ENCODE measurements at regions of chr17 and their contacts with region 1.

Region 1: GRCh38 chr17:43324205-43324893 is 74.4 kb upstream of the ARL4D start:
- DNase-seq: no peak
- H3K4me3 ChIP-seq: no peak overlapping the region
- H3K27ac ChIP-seq: no peak overlapping the region
- H3K4me1 ChIP-seq: peaks cover 7% of the 10 kb centered on the region
- H3K27me3 ChIP-seq: no peaks in the 10 kb centered on the region
- CTCF ChIP-seq: peak; percentile 11 to 54

Region 2: GRCh38 chr17:42832974-42833766 is 491.2 kb before region 1 on chr17 and contains the start of gene PSME3:
- CTCF ChIA-PET with region 1: no interaction called
- dilution Hi-C with region 1: no loop called
- in situ Hi-C with region 1: loop called in 1 of 2 experiments (anchors 25 kb)
- intact Hi-C with region 1: no loop called
- DNase-seq: peak; percentile 90
- H3K4me3 ChIP-seq: peak within 1 kb of the TSS; percentile 66 to 81 (median 78)
- H3K27ac ChIP-seq: peak within 1 kb of the TSS; percentile 96
- H3K4me1 ChIP-seq: peaks cover 15% of the 10 kb centered on the region
- H3K27me3 ChIP-seq: no peaks in the 10 kb centered on the region
- CTCF ChIP-seq: no peak
- total RNA-seq, gene PSME3: 93.5 to 186 TPM

Region 3: GRCh38 chr17:43006639-43007551 is 317.5 kb before region 1 on chr17 and contains the start of gene IFI35:
- CTCF ChIA-PET with region 1: no interaction called
- dilution Hi-C with region 1: no loop called
- in situ Hi-C with region 1: loop called in 1 of 2 experiments (anchors 25 kb)
- intact Hi-C with region 1: no loop called
- DNase-seq: peak; percentile 71
- H3K4me3 ChIP-seq: peak within 1 kb of the TSS; percentile 55 to 64 (median 55)
- H3K27ac ChIP-seq: peak within 1 kb of the TSS; percentile 68
- H3K4me1 ChIP-seq: peaks cover 12% of the 10 kb centered on the region
- H3K27me3 ChIP-seq: no peaks in the 10 kb centered on the region
- CTCF ChIP-seq: peak; percentile 10 to 41
- total RNA-seq, gene IFI35: 6.7 to 7.3 TPM

Region 4: DNA sequence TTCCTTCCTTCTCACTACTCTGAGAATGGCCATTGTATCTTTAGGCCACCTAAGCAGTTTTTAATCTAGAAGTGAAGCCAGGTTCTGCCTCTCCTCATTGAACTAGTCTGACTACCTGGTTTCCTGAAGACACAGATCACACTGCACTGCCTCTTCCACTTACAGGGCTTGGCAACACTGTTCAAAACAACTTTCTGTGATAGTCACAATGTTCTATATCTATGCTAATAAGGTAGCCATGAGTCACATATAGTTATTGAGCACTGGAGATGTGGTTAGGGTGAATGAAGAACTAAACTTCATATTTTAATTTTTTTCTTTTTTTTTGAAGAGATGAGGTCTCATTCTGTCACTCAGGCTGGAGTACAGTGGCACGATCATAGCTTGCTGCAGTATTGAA is 272.4 kb before region 1 on chr17:
- CTCF ChIA-PET with region 1: no interaction called
- dilution Hi-C with region 1: no loop called
- in situ Hi-C with region 1: no loop called
- intact Hi-C with region 1: no loop called
- DNase-seq: no peak
- H3K4me3 ChIP-seq: no peak overlapping the region
- H3K27ac ChIP-seq: no peak overlapping the region
- H3K4me1 ChIP-seq: no peaks in the 10 kb centered on the region
- H3K27me3 ChIP-seq: no peaks in the 10 kb centered on the region
- CTCF ChIP-seq: no peak

Region 5: GRCh38 chr17:43723697-43724359 is 399.5 kb after region 1 on chr17:
- CTCF ChIA-PET with region 1: no interaction called
- dilution Hi-C with region 1: no loop called
- in situ Hi-C with region 1: no loop called
- intact Hi-C with region 1: no loop called
- DNase-seq: peak; percentile 54
- H3K4me3 ChIP-seq: no peak overlapping the region
- H3K27ac ChIP-seq: no peak overlapping the region
- H3K4me1 ChIP-seq: peaks cover 22% of the 10 kb centered on the region
- H3K27me3 ChIP-seq: no peaks in the 10 kb centered on the region
- CTCF ChIP-seq: no peak

Measured in mammary epithelial cell (primary cell).